ENCODE measurements at regions of chr6 and their contacts with region 1.

Region 1: DNA sequence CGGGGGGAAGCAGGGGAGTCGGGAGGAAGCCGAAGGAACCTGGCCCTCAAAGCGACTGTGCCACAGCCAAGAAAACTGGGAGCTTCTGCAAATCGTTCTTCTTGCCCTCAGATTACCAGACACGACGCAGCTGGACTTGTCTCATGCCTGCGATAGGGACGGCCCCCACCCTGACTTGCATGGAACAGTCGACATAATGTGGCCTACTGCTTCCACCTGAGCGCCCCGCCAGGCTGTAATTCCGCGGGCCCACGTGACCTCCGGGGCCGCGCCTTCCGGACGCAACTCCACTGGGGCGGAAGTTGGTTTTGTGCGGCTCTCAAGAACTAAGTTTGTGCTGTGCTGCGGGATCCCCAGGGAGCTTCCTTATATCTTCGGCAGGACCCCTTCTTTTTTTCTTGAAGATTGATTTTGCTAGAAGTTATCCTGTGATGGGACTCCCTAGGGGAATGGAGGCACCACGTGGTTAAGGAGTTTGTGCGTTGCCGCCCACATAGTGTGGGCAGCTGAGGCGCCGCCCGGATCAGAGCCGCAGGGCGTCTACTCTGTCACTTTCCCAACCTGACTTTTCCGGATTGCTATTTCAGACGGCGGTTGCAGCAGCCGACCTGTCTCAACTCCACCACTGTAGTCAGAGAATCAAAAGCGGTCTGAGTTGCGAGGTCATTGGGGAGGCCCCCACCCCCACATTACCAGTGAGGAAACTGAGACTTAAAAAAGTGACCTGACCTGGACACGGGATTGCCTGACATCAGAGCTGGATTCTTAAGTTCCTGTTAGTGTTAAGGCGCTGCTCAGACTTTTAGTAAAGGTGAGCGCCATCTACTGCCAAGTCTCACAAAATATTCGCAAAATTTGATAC is 540 bp upstream of the CD164 start:
- DNase-seq: peak; percentile 94
- ATAC-seq: peak; percentile 75

Region 2: GRCh38 chr6:109187399-109188114 is 195.2 kb before region 1 on chr6:
- intact Hi-C with region 1: loop called in 1 of 2 experiments (anchors 5 kb)
- DNase-seq: peak; percentile 33 to 75
- ATAC-seq: peak; percentile 87

Measured in left colon (tissue), 2 donors.